ENCODE measurements at regions of chr1 and their contacts with region 1.

Region 1: DNA sequence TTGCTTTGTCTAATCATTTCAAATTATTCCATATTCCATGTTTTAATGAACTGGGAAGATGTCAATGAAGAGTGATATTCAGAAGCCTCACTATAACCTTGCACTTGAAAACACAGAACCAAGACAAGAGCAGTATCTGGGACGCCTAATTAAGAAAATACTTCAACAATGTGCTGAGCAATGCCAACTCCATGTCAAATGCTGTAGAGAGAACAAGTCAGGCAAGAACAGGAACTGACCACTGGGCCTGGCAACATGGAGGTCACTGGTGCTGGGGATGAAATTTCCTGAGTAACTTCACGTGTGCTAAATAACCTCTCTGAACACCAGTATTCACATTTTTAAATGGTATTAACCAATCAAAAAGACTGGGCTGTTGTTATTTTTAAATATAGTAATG is 22.8 kb downstream of the HEATR1 start:
- DNase-seq: no peak
- H3K4me3 Mint-ChIP-seq: no peak overlapping the region
- H3K27ac Mint-ChIP-seq: no peak overlapping the region
- H3K4me1 Mint-ChIP-seq: no peaks in the 10 kb centered on the region
- H3K27me3 Mint-ChIP-seq: no peaks in the 10 kb centered on the region
- CTCF ChIP-seq: no peak

Region 2: GRCh38 chr1:236239092-236239585 is 342.4 kb before region 1 on chr1:
- CTCF ChIA-PET with region 1: no interaction called
- intact Hi-C with region 1: no loop called
- DNase-seq: no peak
- H3K4me3 Mint-ChIP-seq: no peak overlapping the region
- H3K27ac Mint-ChIP-seq: no peak overlapping the region
- H3K4me1 Mint-ChIP-seq: no peaks in the 10 kb centered on the region
- H3K27me3 Mint-ChIP-seq: no peaks in the 10 kb centered on the region
- CTCF ChIP-seq: no peak

Region 3: DNA sequence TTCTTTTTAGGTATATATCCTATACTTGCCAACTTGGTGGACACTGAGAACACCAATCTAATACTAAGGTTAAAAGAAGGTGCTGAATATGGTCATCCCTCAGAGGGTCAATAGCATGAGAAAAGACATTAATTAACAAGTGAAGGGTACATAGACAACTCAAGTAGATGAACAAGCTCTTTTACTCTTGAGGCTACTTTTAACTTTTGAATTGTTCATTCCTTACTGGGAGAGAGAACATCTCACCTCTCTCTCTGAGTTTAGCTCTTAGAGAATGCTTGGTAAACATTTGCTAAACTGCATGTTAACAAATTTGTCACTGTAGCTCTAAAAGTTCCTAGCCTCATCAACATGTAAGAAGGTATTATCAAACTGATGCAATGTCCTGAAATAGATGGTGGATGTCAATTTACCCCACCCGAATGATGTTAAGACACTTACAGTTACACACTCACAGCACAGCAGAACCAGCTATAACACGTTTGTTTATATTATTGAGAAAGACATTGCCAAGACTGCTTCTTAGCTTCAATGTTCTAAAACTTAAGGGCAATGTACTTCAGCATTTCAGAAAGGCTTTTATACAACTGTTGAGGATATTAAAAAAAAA is 13.1 kb before region 1 on chr1:
- CTCF ChIA-PET with region 1: no interaction called
- intact Hi-C with region 1: loop called (anchors 1 kb)
- DNase-seq: no peak
- H3K4me3 Mint-ChIP-seq: no peak overlapping the region
- H3K27ac Mint-ChIP-seq: peak overlapping the region; percentile 3
- H3K4me1 Mint-ChIP-seq: no peaks in the 10 kb centered on the region
- H3K27me3 Mint-ChIP-seq: no peaks in the 10 kb centered on the region
- CTCF ChIP-seq: no peak

Region 4: DNA sequence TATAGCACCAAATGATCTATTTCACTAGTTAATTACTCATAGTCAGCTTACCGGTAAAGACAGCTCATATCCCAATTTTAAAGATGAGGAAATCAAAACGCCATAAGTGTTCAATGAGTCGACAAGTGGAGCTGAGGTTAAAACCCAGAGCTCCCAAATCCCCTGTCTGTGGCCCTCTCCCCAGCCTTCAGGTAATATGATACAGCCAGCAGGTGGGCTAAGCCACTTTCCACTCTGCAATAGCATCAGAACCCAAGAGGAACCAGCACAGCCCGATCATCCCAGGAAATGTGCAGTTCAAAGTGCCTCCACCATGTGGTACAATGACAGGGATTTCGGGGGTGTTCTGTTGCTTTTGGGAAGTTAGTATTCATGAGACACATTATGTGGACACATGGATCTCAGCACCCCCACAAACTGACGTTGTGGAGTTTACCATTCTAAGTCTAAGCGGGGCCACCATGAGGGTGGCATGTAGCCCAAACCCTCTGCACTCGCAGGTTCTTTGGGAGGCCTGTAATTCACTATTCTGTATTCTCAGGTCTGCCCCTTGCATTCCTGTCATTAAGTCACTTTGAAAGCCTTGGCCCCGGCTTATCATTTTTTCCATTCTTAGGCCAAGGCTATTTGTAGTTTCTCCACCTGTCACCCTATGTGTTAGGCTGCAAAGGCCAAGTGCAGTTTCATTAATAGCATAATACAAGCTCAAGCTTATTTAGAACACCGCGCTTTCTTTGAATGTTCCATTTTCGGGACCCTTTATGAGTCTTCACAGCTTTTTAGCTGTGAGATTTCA is 78.5 kb after region 1 on chr1:
- CTCF ChIA-PET with region 1: no interaction called
- intact Hi-C with region 1: no loop called
- DNase-seq: no peak
- H3K4me3 Mint-ChIP-seq: no peak overlapping the region
- H3K27ac Mint-ChIP-seq: no peak overlapping the region
- H3K4me1 Mint-ChIP-seq: no peaks in the 10 kb centered on the region
- H3K27me3 Mint-ChIP-seq: no peaks in the 10 kb centered on the region
- CTCF ChIP-seq: no peak